ENCODE measurements at regions of chr22 and their contacts with region 1.

Region 1: GRCh38 chr22:36387752-36388518 is at the start of gene MYH9:
- H3K4me3 ChIP-seq: peak within 1 kb of the TSS; percentile 94
- H3K27ac ChIP-seq: peak within 1 kb of the TSS; percentile 95
- H3K4me1 ChIP-seq: peaks cover 12% of the 10 kb centered on the region; the same call in 1 of the 2 replicates
- CTCF ChIP-seq: no peak

Region 2: DNA sequence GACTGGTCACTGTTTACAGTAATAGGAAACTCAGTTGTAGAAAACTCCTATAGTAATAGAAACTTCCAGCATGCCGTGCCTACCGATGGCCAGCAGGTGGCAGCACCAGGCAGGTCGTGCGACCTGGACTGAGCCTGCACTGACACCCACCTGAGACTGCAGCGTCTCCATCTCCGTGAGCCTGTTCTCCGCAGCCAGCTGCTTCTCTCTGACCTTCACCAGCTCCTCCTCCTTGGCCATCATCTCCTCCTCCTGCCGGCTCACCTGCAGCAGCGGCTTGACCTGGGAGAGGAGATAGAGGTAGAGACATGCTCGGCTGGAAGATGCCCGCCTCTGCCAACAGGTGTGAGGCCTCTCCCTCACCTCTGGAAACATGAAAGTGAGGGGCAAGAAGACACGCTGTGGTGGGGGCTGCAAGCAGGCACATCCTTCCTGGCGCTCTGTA is 86.5 kb before region 1 on chr22:
- CTCF ChIA-PET with region 1: interaction called, 7 read pairs
- POLR2A ChIA-PET with region 1: interaction called, 10 read pairs
- H3K4me3 ChIP-seq: no peak overlapping the region
- H3K27ac ChIP-seq: no peak overlapping the region
- H3K4me1 ChIP-seq: no peaks in the 10 kb centered on the region
- CTCF ChIP-seq: peak; percentile 81

Region 3: DNA sequence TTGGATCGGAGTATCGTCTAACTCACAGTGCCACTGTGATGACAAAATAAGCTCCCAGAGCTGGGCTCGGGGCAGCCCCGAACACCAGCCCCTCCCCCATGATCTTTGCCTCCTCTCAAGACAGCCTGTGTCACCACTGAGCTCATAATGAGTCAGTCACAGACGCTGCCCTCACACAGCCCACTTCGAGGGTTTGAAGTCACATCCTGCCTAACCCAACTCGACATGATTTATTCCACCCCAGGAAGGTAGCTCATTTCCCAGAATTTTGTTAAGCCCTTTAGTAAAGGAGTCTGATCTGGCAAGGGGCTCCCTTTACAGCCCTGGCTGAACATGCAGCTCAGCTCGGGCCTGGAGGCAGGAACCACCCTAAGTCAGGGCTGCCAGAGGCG is 22.9 kb before region 1 on chr22:
- CTCF ChIA-PET with region 1: interaction called, 3 read pairs
- POLR2A ChIA-PET with region 1: interaction called, 31 read pairs
- H3K4me3 ChIP-seq: no peak overlapping the region
- H3K27ac ChIP-seq: no peak overlapping the region
- H3K4me1 ChIP-seq: peaks cover 57% of the 10 kb centered on the region
- CTCF ChIP-seq: no peak

Region 4: GRCh38 chr22:36398621-36399469 is 10.9 kb after region 1 on chr22:
- CTCF ChIA-PET with region 1: interaction called, 3 read pairs
- POLR2A ChIA-PET with region 1: interaction called, 27 read pairs
- H3K4me3 ChIP-seq: no peak overlapping the region
- H3K27ac ChIP-seq: no peak overlapping the region
- H3K4me1 ChIP-seq: peaks cover 12% of the 10 kb centered on the region
- CTCF ChIP-seq: no peak

Region 5: DNA sequence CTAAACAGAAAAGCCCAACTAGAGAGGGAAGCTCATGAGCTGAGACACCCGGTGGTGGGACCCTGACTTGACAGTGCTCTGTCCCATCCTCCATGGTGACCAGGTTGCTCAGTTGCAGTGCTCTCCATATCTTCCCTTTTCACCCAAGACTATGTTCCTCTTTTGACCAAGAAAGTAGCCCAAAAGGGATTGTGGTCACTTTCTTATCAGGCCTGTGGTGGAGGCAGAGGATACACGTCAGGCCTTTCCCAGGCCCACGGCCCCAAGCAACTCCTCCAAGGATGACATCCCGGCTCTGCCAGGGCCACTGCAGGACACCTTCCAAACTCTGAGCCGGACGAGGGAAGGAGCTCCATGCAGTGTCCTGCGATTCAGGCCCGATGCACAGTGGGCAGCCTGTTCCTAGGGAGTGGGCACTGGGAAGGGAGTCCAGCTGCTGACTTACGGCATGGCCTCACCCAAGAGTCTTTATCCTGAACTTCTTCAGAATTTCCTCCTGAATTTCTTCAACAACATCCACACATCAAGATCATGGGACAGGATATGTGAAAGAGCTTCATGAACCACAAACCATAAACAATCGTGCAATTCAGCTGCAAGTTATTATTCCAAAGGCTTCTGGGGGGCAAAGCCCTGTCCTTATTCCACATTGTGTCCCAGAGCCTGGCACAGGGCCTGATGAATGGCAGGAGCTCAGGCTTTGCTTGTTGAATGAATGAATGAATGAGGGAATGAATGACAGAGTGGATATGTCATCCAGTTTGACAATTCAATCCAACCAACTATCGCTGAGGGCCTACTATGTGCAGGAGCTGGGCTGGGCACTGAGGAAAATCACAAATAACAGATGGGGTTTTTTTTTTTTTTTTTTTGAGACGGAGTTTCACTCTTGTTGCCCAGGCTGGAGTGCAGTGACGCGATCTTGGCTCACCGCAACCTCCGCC is 35.8 kb after region 1 on chr22:
- CTCF ChIA-PET with region 1: interaction called, 3 read pairs
- POLR2A ChIA-PET with region 1: interaction called, 10 read pairs
- H3K4me3 ChIP-seq: no peak overlapping the region
- H3K27ac ChIP-seq: no peak overlapping the region
- H3K4me1 ChIP-seq: 0 out of 2 replicates have a peak, but pooled peaks cover 6% of the 10 kb centered on the region
- CTCF ChIP-seq: no peak

Region 6: GRCh38 chr22:36461669-36462649 is 74.0 kb after region 1 on chr22:
- CTCF ChIA-PET with region 1: interaction called, 3 read pairs
- POLR2A ChIA-PET with region 1: interaction called, 15 read pairs
- H3K4me3 ChIP-seq: no peak overlapping the region
- H3K27ac ChIP-seq: peak overlapping the region; percentile 8; the same call in 1 of the 2 replicates
- H3K4me1 ChIP-seq: peaks cover 18% of the 10 kb centered on the region
- CTCF ChIP-seq: no peak

Region 7: GRCh38 chr22:36562261-36562835 is 174.4 kb after region 1 on chr22:
- CTCF ChIA-PET with region 1: no interaction called
- POLR2A ChIA-PET with region 1: no interaction called
- H3K4me3 ChIP-seq: no peak overlapping the region
- H3K27ac ChIP-seq: no peak overlapping the region
- H3K4me1 ChIP-seq: no peaks in the 10 kb centered on the region
- CTCF ChIP-seq: no peak